ENCODE measurements at regions of chrX and their contacts with region 1.

Region 1: GRCh38 chrX:31036895-31037294 is 34.9 kb downstream of the FTHL17 start:
- DNase-seq: peak; percentile 61
- H3K4me3 Mint-ChIP-seq: no peak overlapping the region
- H3K27ac Mint-ChIP-seq: no peak overlapping the region
- H3K4me1 Mint-ChIP-seq: peaks cover 7% of the 10 kb centered on the region
- H3K27me3 Mint-ChIP-seq: no peaks in the 10 kb centered on the region

Region 2: GRCh38 chrX:30910124-30910860 is 126.6 kb before region 1 on chrX:
- intact Hi-C with region 1: no loop called
- DNase-seq: peak; percentile 58
- H3K4me3 Mint-ChIP-seq: peak overlapping the region; percentile 32
- H3K27ac Mint-ChIP-seq: peak overlapping the region; percentile 74
- H3K4me1 Mint-ChIP-seq: peaks cover 6% of the 10 kb centered on the region
- H3K27me3 Mint-ChIP-seq: peaks cover 3% of the 10 kb centered on the region

Region 3: GRCh38 chrX:31213941-31214340 is 177.0 kb after region 1 on chrX:
- intact Hi-C with region 1: loop called (anchors 5 kb)
- DNase-seq: peak; percentile 53
- H3K4me3 Mint-ChIP-seq: no peak overlapping the region
- H3K27ac Mint-ChIP-seq: no peak overlapping the region
- H3K4me1 Mint-ChIP-seq: peaks cover 3% of the 10 kb centered on the region
- H3K27me3 Mint-ChIP-seq: no peaks in the 10 kb centered on the region

Region 4: GRCh38 chrX:31293409-31293808 is 256.5 kb after region 1 on chrX:
- intact Hi-C with region 1: loop called (anchors 1 kb)
- DNase-seq: peak; percentile 49
- H3K4me3 Mint-ChIP-seq: no peak overlapping the region
- H3K27ac Mint-ChIP-seq: no peak overlapping the region
- H3K4me1 Mint-ChIP-seq: no peaks in the 10 kb centered on the region
- H3K27me3 Mint-ChIP-seq: no peaks in the 10 kb centered on the region

Region 5: DNA sequence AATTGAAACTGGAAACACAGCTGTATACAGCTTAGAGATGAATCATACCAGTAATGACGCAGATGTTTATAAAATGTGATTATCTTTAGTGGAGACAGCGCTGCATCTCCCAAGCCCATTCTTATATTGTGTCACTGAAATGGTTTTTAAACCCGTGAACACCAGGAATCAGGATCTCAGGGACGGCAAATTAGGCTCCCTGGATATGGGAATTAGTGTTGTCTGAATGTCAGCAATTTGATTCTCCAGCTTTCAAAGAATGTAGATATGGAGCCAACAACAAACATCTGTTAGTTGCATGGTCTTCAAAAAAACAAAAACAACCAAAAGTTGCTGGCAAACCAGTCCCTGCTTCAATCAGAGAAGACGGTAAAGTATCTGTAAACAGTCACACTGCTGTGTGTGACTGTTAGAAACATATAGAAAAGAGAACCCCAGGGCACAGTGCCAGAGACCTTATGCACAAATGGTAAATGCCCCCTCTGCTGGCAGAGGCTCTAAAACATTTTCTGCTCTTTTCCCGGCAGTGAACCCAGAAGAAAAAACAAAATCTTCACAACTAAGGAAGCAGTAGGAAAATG is 386.8 kb after region 1 on chrX:
- intact Hi-C with region 1: loop called (anchors 5 kb)
- DNase-seq: peak; percentile 57
- H3K4me3 Mint-ChIP-seq: no peak overlapping the region
- H3K27ac Mint-ChIP-seq: no peak overlapping the region
- H3K4me1 Mint-ChIP-seq: no peaks in the 10 kb centered on the region
- H3K27me3 Mint-ChIP-seq: no peaks in the 10 kb centered on the region